H1 (cell line): ENCODE measurements at regions of chr2 and their contacts with region 1.

Region 1: DNA sequence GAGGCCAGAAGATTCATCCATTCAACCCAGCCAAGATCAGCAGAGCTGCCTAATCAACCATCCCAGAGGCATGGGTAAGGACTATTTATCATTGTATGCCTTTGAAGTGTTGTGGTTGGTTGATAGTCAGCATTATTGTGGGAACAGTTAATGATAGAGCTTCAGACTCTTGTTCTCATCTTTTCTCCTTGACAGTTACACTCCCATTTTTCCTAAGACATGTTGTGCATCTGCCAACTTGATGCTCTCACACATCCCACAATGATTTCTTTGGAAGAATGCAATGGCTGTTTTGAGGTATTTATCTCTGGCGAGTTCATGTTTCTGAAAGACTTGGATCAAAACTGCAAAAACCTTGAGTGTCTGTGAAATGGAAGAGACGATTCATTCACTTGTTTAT is 55.4 kb downstream of the FASTKD2 start:
- DNase-seq: no peak
- H3K4me3 ChIP-seq: no peak overlapping the region
- H3K27ac ChIP-seq: no peak overlapping the region
- H3K4me1 ChIP-seq: peaks cover 0 to 6% (median 0%) of the 10 kb centered on the region in 4 experiments; a peak in 2 of 7 replicates
- H3K27me3 ChIP-seq: peaks cover 0 to 1% (median 0%) of the 10 kb centered on the region in 4 experiments; a peak in 1 of 7 replicates
- CTCF ChIP-seq: no peak
- EP300 ChIP-seq: no peak
- POLR2A ChIP-seq: no peak
- RAD21 ChIP-seq: no peak

Region 2: GRCh38 chr2:206408323-206409320 is 412.2 kb before region 1 on chr2:
- CTCF ChIA-PET with region 1: no interaction called
- POLR2A ChIA-PET with region 1: no interaction called
- DNase-seq: no peak
- H3K4me3 ChIP-seq: no peak overlapping the region
- H3K27ac ChIP-seq: no peak overlapping the region
- H3K4me1 ChIP-seq: no peaks in the 10 kb centered on the region
- H3K27me3 ChIP-seq: no peaks in the 10 kb centered on the region
- CTCF ChIP-seq: no peak
- EP300 ChIP-seq: no peak
- POLR2A ChIP-seq: no peak
- RAD21 ChIP-seq: no peak

Region 3: GRCh38 chr2:206832873-206833272 is 12.1 kb after region 1 on chr2:
- CTCF ChIA-PET with region 1: interaction called, 16 read pairs
- POLR2A ChIA-PET with region 1: interaction called, 8 read pairs
- DNase-seq: no peak
- H3K4me3 ChIP-seq: no peak overlapping the region
- H3K27ac ChIP-seq: no peak overlapping the region
- H3K4me1 ChIP-seq: peaks cover 0 to 4% (median 0%) of the 10 kb centered on the region in 4 experiments; a peak in 1 of 7 replicates
- H3K27me3 ChIP-seq: no peaks in the 10 kb centered on the region
- CTCF ChIP-seq: no peak
- EP300 ChIP-seq: no peak
- POLR2A ChIP-seq: no peak
- RAD21 ChIP-seq: no peak

Region 4: DNA sequence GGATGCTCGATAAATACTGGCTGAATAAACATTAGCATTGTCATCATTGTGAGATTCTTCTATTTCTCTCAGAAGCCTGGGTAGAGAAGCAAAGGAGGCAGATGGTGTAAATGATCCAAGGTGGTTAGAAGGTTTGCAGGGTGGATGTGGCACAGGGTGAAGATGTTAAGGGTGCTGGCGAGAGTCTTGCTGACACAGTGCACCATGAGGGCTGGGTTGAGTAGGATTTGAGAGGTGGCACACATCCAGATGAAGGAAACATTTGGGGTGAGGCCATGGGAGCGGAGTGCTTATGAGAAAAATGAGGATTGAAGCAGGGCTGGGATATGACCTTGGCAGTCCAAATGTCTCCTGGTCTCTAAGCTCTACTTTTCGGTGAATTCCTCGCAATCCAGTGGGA is 100.7 kb after region 1 on chr2:
- CTCF ChIA-PET with region 1: no interaction called
- POLR2A ChIA-PET with region 1: no interaction called
- DNase-seq: no peak
- H3K4me3 ChIP-seq: no peak overlapping the region
- H3K27ac ChIP-seq: no peak overlapping the region
- H3K4me1 ChIP-seq: peaks cover 0 to 5% (median 3%) of the 10 kb centered on the region in 4 experiments; a peak in 3 of 7 replicates
- H3K27me3 ChIP-seq: no peaks in the 10 kb centered on the region
- CTCF ChIP-seq: no peak
- EP300 ChIP-seq: no peak
- POLR2A ChIP-seq: no peak
- RAD21 ChIP-seq: no peak

Region 5: GRCh38 chr2:207066791-207067460 is 246.1 kb after region 1 on chr2:
- CTCF ChIA-PET with region 1: no interaction called
- POLR2A ChIA-PET with region 1: no interaction called
- DNase-seq: no peak
- H3K4me3 ChIP-seq: no peak overlapping the region
- H3K27ac ChIP-seq: no peak overlapping the region
- H3K4me1 ChIP-seq: 0 out of 7 replicates have a peak, but pooled peaks cover 0 to 4% (median 0%) of the 10 kb centered on the region in 4 experiments
- H3K27me3 ChIP-seq: no peaks in the 10 kb centered on the region
- CTCF ChIP-seq: no peak
- EP300 ChIP-seq: no peak
- POLR2A ChIP-seq: no peak
- RAD21 ChIP-seq: no peak

Region 6: DNA sequence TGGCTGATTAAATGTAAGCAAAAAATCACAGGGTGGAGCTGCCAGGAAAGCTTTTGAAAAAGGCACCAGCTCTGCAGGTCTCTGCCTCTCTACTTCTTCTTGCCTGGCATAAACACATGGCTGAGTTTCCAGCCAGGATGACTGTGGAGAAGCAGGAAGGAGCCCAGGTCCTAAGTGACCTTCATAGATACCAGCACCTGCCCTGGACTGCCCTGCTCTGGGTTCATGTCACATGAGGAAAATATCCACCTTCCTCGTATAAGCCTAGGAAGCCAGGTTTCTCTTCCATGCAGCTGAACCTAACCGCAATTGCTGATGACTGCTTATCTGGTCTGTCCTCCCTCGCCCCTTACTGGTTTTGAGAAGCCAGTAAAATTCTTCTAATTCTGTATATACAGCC is 661.1 kb after region 1 on chr2:
- CTCF ChIA-PET with region 1: no interaction called
- POLR2A ChIA-PET with region 1: no interaction called
- DNase-seq: no peak
- H3K4me3 ChIP-seq: no peak overlapping the region
- H3K27ac ChIP-seq: no peak overlapping the region
- H3K4me1 ChIP-seq: peaks cover 0 to 10% (median under 1%) of the 10 kb centered on the region in 4 experiments; a peak in 1 of 7 replicates
- H3K27me3 ChIP-seq: no peaks in the 10 kb centered on the region
- CTCF ChIP-seq: no peak
- EP300 ChIP-seq: no peak
- POLR2A ChIP-seq: no peak
- RAD21 ChIP-seq: no peak